Dorsolateral prefrontal cortex (tissue), 120 donors: ENCODE measurements at regions of chr1 and their contacts with region 1.

Region 1: DNA sequence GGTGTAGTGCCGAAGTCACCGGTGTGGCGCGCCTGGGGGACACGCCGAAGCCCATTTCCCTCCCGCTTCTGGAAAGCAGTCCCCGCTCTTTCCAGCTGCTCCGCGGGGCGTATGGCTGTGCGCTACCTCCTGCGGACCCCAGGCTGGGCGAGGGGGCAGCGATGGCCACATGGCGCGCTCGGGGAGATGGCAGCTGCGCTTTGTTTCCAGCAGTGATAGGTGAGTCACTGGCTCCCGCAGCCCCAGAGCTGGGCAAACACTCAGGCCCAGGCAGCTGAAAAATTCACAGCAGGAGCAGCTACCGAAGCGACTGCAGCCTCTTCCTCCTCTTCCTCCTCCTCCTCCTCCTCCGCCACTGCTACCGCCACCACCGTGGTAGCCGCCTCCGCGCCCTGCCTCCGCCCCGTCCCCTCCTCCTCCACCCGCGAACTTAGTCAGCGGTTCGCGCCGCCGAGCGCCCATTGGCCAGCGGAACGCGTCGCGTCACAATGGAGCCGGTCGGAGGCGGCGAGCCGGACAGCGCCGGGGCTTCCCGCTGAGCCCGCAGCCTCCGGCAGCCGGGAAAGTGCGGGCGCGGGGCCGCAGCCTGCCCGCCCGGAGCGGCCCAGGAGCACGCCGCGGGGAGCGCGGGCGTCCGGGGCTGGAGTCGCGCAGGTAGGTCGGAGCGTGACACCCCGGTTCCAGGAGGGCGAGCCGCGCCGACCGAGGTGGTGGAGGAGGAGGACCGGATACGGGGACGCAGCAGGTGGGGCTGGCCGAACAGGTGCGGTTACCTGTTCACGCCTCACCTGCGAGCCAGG is at the start of gene LRRC8B:
- DNase-seq: peak; percentile 66 to 96 (median 90)
- H3K4me3 ChIP-seq: peak within 1 kb of the TSS; percentile 67 to 100 (median 95)
- H3K27ac ChIP-seq: peak within 1 kb of the TSS; percentile 80 to 98 (median 95)
- H3K27me3 ChIP-seq: no peaks in the 10 kb centered on the region
- CTCF ChIP-seq: peak in 15 of 56 donors; percentile 5 to 54 (median 14)
- total RNA-seq, gene LRRC8B: 38.4 to 137 (median 85.9) TPM

Region 2: GRCh38 chr1:89489047-89489729 is 35.4 kb before region 1 on chr1:
- intact Hi-C with region 1: loop called (anchors 5 kb)
- DNase-seq: peak in 1 of 10 donors; percentile 44
- H3K4me3 ChIP-seq: no peak overlapping the region
- H3K27ac ChIP-seq: no peak overlapping the region
- H3K27me3 ChIP-seq: no peaks in the 10 kb centered on the region
- CTCF ChIP-seq: no peak

Region 3: GRCh38 chr1:89503690-89504089 is 20.9 kb before region 1 on chr1:
- intact Hi-C with region 1: no loop called
- DNase-seq: no peak
- H3K4me3 ChIP-seq: no peak overlapping the region
- H3K27ac ChIP-seq: peak overlapping the region in 3 of 59 donors; percentile 0 to 30 (median 8)
- H3K27me3 ChIP-seq: no peaks in the 10 kb centered on the region
- CTCF ChIP-seq: no peak

Region 4: GRCh38 chr1:89566761-89567174 is 42.2 kb after region 1 on chr1:
- intact Hi-C with region 1: loop called (anchors 2 kb)
- DNase-seq: peak in 9 of 10 donors; percentile 62 to 78 (median 72)
- H3K4me3 ChIP-seq: peak overlapping the region in 52 of 59 donors; percentile 4 to 58 (median 28)
- H3K27ac ChIP-seq: peak overlapping the region; percentile 80 to 98 (median 93)
- H3K27me3 ChIP-seq: no peaks in the 10 kb centered on the region
- CTCF ChIP-seq: peak in 9 of 56 donors; percentile 8 to 24 (median 13)

Region 5: GRCh38 chr1:89598450-89599331 is 74.1 kb after region 1 on chr1:
- intact Hi-C with region 1: loop called (anchors 2 to 5 kb)
- DNase-seq: no peak
- H3K4me3 ChIP-seq: peak overlapping the region in 2 of 59 donors; percentile 9 to 12
- H3K27ac ChIP-seq: peak overlapping the region in 56 of 59 donors; percentile 1 to 78 (median 53)
- H3K27me3 ChIP-seq: no peaks in the 10 kb centered on the region
- CTCF ChIP-seq: peak; percentile 69 to 93 (median 84)

Region 6: GRCh38 chr1:89632657-89633247 is 108.2 kb after region 1 on chr1 and contains the start of gene LRRC8C:
- intact Hi-C with region 1: loop called (anchors 2 to 10 kb)
- DNase-seq: peak; percentile 39 to 94 (median 78)
- H3K4me3 ChIP-seq: peak within 1 kb of the TSS; percentile 58 to 98 (median 93)
- H3K27ac ChIP-seq: peak within 1 kb of the TSS; percentile 88 to 99 (median 98)
- H3K27me3 ChIP-seq: no peaks in the 10 kb centered on the region
- CTCF ChIP-seq: peak in 44 of 56 donors; percentile 10 to 85 (median 42)
- total RNA-seq, gene LRRC8C: 10.3 to 21.7 (median 16.1) TPM

Region 7: GRCh38 chr1:89994805-89995597 is 470.4 kb after region 1 on chr1 and contains the start of gene ZNF326:
- intact Hi-C with region 1: loop called in 1 of 2 experiments (anchors 10 kb)
- DNase-seq: peak; percentile 90 to 98 (median 94)
- H3K4me3 ChIP-seq: peak within 1 kb of the TSS; percentile 59 to 98 (median 89)
- H3K27ac ChIP-seq: peak within 1 kb of the TSS; percentile 74 to 98 (median 93)
- H3K27me3 ChIP-seq: no peaks in the 10 kb centered on the region
- CTCF ChIP-seq: peak in 35 of 56 donors; percentile 6 to 61 (median 34)
- total RNA-seq, gene ZNF326: 23.0 to 50.7 (median 32.2) TPM